Ascending aorta (tissue), 2 donors: ENCODE measurements at regions of chr11 and their contacts with region 1.

Region 1: DNA sequence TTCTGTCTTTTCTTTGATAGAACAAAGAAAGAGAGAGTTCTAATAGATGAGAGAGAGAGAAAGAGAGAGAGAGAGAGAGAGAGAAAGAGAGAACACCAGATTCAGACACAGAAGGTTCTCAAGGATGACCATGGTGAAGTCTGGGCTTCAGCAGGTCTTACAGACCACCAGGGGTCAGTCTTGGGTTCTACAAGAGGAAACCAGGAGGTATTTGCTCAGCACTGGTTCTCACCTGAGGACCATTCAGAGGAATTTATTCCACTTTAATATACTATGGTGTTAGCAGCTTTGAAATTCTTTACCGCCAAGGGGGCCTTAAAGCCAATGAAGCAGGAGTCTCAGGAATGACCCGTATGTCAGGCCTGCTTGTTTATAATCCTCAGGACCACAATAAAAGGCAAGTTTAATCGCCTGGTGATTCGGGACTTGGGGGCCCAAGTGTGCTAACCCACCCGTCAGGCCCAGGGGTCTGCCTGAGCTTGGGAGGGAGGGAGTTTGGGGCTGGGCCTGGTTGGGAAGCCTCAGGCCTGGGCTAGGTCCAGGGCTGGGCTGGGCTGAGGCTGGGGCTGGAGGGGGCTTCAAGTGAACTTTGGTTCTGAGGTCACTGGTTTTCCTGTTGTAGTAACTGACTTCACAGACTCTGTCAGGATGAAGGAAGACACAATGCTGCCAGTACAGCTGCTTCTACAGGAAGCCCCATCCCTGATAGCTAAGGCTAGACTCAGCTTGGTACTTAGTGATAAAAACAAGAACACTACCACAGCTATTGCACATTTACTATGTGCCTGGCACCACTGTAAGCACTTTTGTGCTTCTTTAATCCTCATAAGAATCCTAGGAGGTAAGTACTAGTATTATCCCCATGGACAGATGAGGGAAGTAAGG is 179.2 kb upstream of the ZBED5 start:
- DNase-seq: no peak
- H3K4me3 ChIP-seq: no peak overlapping the region
- H3K27ac ChIP-seq: peak overlapping the region in 1 of 2 donors; percentile 53
- H3K4me1 ChIP-seq: peaks cover 7 to 18% of the 10 kb centered on the region in 2 donors
- H3K27me3 ChIP-seq: no peaks in the 10 kb centered on the region
- CTCF ChIP-seq: peak; percentile 65 to 76 (median 68)

Region 2: DNA sequence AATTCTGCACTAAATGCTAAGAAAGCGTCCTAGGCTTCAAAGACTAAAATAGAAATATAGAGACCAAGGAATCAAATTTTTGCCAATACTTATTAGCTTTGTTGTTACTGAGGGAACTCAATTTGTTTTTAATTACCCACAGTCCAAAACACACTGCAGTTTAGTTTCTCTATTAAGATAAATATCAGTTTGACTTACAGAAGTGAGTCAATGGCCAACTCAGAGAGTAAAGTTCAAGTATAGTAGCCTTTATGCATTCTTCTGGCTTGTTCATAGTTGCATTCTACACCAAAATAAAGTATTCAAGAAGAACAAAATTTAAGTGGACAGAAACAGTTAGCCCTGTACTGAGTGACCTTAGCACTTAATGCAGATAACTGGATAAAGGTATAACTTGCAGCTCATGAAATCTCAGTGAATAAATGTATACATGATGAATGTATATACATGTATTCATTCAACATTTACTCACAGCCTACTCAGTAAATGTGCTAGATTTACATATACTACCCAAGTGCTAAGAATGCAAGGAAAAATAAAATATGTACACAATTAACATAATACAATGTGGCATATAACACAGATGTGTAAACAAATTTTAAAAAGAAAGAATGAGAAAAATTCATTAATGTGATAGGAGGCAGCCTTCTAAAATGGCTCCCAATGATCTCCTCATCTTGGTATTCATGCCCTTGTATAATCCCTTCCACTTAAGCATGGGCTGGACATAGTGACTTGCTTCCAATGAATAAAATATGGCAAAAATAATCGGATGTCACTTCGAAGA is 486.4 kb before region 1 on chr11:
- intact Hi-C with region 1: no loop called
- DNase-seq: no peak
- H3K4me3 ChIP-seq: no peak overlapping the region
- H3K27ac ChIP-seq: no peak overlapping the region
- H3K4me1 ChIP-seq: no peaks in the 10 kb centered on the region
- H3K27me3 ChIP-seq: no peaks in the 10 kb centered on the region
- CTCF ChIP-seq: no peak

Region 3: GRCh38 chr11:11095831-11096723 is 59.0 kb after region 1 on chr11:
- intact Hi-C with region 1: no loop called
- DNase-seq: no peak
- H3K4me3 ChIP-seq: no peak overlapping the region
- H3K27ac ChIP-seq: no peak overlapping the region
- H3K4me1 ChIP-seq: no peaks in the 10 kb centered on the region
- H3K27me3 ChIP-seq: no peaks in the 10 kb centered on the region
- CTCF ChIP-seq: no peak

Region 4: GRCh38 chr11:11148104-11148509 is 111.0 kb after region 1 on chr11:
- intact Hi-C with region 1: loop called (anchors 5 kb)
- DNase-seq: peak; percentile 43 to 93
- H3K4me3 ChIP-seq: no peak overlapping the region
- H3K27ac ChIP-seq: peak overlapping the region; percentile 46
- H3K4me1 ChIP-seq: peaks cover 1 to 24% of the 10 kb centered on the region in 2 donors
- H3K27me3 ChIP-seq: no peaks in the 10 kb centered on the region
- CTCF ChIP-seq: peak in 2 of 3 experiments; percentile 42 to 46

Region 5: GRCh38 chr11:11265994-11266606 is 229.0 kb after region 1 on chr11:
- intact Hi-C with region 1: loop called (anchors 2 kb)
- DNase-seq: peak in 1 of 2 donors; percentile 63
- H3K4me3 ChIP-seq: no peak overlapping the region
- H3K27ac ChIP-seq: no peak overlapping the region
- H3K4me1 ChIP-seq: peaks cover 0 to 5% of the 10 kb centered on the region in 2 donors
- H3K27me3 ChIP-seq: no peaks in the 10 kb centered on the region
- CTCF ChIP-seq: peak; percentile 61 to 77 (median 73)